Activated T-helper 2 cell treated with anti-CD3 and anti-CD28 coated beads, Interferon-gamma antibody, Interleukin-2, Interleukin-4, amounts not matched to agents 10 μg/mL and 5 μg/mL and 100 μg/mL, durations not matched to agents 14 hours and 24 hours and 36 hours (primary cell): ENCODE measurements at regions of chr20 and their contacts with region 1.

Region 1: GRCh38 chr20:35092524-35093266 is at the start of gene TRPC4AP:
- DNase-seq: peak; percentile 88
- H3K4me3 Mint-ChIP-seq: peak within 1 kb of the TSS; percentile 94
- H3K27ac Mint-ChIP-seq: peak within 1 kb of the TSS; percentile 98
- H3K4me1 Mint-ChIP-seq: peaks cover 43% of the 10 kb centered on the region
- H3K27me3 Mint-ChIP-seq: no peaks in the 10 kb centered on the region
- total RNA-seq, gene TRPC4AP: 52.3 and 52.4 TPM in 2 replicates

Region 2: GRCh38 chr20:34825530-34826362 is 266.9 kb before region 1 on chr20 and contains the start of gene NCOA6:
- intact Hi-C with region 1: loop called (anchors 10 kb)
- DNase-seq: peak; percentile 72
- H3K4me3 Mint-ChIP-seq: peak within 1 kb of the TSS; percentile 98
- H3K27ac Mint-ChIP-seq: peak within 1 kb of the TSS; percentile 94
- H3K4me1 Mint-ChIP-seq: peaks cover 29% of the 10 kb centered on the region
- H3K27me3 Mint-ChIP-seq: peaks cover 11% of the 10 kb centered on the region
- total RNA-seq, gene NCOA6: 29.1 and 30.9 TPM in 2 replicates

Region 3: GRCh38 chr20:34955232-34956040 is 137.3 kb before region 1 on chr20 and contains the starts of genes GSS and MYH7B:
- intact Hi-C with region 1: loop called (anchors 5 kb)
- DNase-seq: peak; percentile 96
- H3K4me3 Mint-ChIP-seq: peak within 1 kb of the TSS; percentile 97
- H3K27ac Mint-ChIP-seq: peak within 1 kb of the TSS; percentile 97
- H3K4me1 Mint-ChIP-seq: peaks cover 15% of the 10 kb centered on the region
- H3K27me3 Mint-ChIP-seq: no peaks in the 10 kb centered on the region
- total RNA-seq, gene GSS: 70.5 and 77.1 TPM in 2 replicates
- total RNA-seq, gene MYH7B: 0.30 and 0.34 TPM in 2 replicates

Region 4: GRCh38 chr20:35146920-35147574 is 54.4 kb after region 1 on chr20 and contains the start of gene EDEM2:
- intact Hi-C with region 1: loop called (anchors 5 kb)
- DNase-seq: peak; percentile 93
- H3K4me3 Mint-ChIP-seq: peak within 1 kb of the TSS; percentile 96
- H3K27ac Mint-ChIP-seq: peak within 1 kb of the TSS; percentile 91
- H3K4me1 Mint-ChIP-seq: peaks cover 28% of the 10 kb centered on the region
- H3K27me3 Mint-ChIP-seq: peaks cover 3% of the 10 kb centered on the region
- total RNA-seq, gene EDEM2: 25.5 and 25.7 TPM in 2 replicates

Region 5: DNA sequence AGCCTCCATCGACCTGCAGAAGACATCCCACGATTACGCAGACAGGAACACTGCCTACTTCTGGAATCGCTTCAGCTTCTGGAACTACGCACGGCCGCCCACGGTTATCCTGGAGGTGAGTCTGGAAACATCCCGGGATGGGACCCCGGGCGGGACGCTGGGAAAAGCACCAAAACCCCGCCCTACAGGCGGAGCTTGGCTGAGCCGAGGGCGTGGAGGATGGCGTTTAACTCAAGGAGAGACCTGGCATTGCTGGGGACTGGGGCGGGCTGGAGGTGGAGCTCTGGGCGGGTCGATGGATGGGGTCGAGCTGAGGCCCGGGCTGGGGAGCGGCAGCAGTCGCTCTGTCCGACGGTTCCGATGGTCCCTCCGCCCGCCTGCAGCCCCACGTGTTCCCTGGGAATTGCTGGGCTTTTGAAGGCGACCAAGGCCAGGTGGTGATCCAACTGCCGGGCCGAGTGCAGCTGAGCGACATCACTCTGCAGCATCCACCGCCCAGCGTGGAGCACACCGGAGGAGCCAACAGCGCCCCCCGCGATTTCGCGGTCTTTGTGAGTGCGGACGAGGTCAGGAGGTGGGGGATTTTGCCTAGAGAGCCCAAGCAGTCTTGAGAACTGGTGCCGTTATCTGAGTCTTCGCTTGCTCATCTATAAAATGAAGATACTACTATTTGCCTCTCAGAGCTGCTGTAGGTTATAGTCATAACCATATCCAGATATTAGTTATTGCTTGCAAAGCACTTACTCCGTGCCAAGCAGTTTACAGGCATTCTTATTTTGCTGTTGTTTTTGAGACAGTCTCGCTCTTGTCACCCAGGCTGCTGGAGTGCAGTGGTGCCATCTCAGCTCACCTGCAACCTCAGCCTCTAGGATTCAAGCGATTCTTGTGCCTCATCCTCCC is 526.8 kb after region 1 on chr20:
- intact Hi-C with region 1: loop called (anchors 5 kb)
- DNase-seq: peak; percentile 72
- H3K4me3 Mint-ChIP-seq: peak overlapping the region; percentile 84
- H3K27ac Mint-ChIP-seq: peak overlapping the region; percentile 87
- H3K4me1 Mint-ChIP-seq: peaks cover 22% of the 10 kb centered on the region
- H3K27me3 Mint-ChIP-seq: no peaks in the 10 kb centered on the region

Region 6: DNA sequence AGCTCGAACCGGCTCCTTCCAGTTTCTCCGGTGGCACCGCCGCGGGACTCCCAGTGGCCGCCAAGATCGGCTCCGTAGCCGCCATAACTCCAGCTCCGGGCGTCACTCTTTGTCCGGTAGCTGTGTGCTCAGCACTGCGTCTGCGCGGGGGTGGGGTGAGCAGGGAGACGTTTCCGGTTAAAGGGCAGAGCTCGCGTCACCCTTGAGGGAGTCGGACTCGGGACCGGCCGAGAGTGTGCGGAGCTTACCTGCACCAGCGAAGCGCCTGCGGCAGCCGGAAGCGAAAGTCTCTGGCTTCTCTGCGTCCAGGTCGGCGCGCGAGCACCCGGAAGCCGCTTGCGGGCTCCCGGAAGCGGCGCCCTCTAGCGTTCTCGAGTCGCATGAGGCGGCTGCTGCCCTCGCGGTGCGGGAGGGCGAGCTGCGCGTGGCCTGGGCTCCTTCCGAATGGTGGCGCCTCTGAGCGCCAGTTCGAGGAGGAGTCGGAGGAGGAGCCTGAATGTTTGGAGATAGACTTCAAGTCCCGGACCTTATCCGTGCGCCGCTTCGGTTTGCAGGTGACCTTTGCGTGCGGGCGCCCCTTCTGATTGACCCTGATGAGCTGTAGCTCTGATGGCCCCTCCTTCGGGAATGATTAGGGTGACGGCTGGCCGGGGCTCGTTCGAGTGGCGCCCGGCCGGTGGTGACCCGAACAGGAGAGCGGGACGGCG is 861.7 kb after region 1 on chr20 and contains the start of gene SCAND1:
- intact Hi-C with region 1: loop called (anchors 5 kb)
- DNase-seq: peak; percentile 97
- H3K4me3 Mint-ChIP-seq: peak within 1 kb of the TSS; percentile 100
- H3K27ac Mint-ChIP-seq: peak within 1 kb of the TSS; percentile 100
- H3K4me1 Mint-ChIP-seq: peaks cover 13% of the 10 kb centered on the region
- H3K27me3 Mint-ChIP-seq: no peaks in the 10 kb centered on the region
- total RNA-seq, gene SCAND1: 39.5 and 40.3 TPM in 2 replicates